ENCODE measurements at regions of chr7 and their contacts with region 1.

Region 1: DNA sequence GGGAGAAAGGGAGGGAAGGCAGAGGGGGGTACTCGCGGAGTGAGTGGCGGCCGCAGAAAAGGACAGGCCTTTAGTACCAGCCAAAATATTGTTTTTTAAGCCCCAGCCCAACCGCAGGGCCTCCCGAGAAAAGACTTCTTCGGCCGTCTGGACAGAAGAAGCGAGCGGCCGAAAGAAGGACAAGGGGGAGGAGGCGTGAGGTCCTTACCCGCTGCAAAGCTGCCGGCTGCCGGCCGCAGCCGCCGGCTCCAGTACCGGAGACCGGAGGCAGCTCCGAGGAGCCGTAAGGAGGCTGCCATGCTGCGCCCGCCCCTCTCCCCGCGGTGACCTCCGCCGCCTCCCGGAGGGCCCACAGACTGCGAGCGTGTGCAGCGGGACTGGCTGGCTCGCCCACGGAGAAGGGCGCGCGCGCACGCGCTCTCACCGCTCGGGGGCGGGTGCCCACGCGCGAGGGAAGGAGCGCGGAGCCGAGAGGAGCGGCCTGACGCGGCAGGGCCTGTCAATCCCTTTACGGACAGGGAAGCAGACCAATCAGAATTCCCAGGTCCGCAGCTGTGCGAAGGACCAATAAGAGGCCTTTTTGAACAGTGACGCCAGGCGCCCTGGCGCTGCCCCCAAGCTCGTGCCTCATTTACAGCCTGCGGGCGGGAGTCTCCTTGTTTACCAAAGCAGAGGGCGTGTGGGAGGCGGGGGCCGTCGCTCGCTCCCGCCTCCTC is at the start of gene HIBADH:
- DNase-seq: peak; percentile 92 to 99
- ATAC-seq: peak; percentile 93 to 99 (median 94)
- H3K4me3 ChIP-seq: peak within 1 kb of the TSS; percentile 91
- H3K4me3 Mint-ChIP-seq: peak within 1 kb of the TSS; percentile 82
- H3K27ac ChIP-seq: peak within 1 kb of the TSS; percentile 69
- H3K27ac Mint-ChIP-seq: peak within 1 kb of the TSS; percentile 86 to 88
- H3K4me1 ChIP-seq: peaks cover 14% of the 10 kb centered on the region
- H3K4me1 Mint-ChIP-seq: peaks cover 4 to 5% of the 10 kb centered on the region in 2 donors
- H3K27me3 ChIP-seq: no peaks in the 10 kb centered on the region
- H3K27me3 Mint-ChIP-seq: no peaks in the 10 kb centered on the region
- CTCF ChIP-seq: no peak
- total RNA-seq, gene HIBADH: 8.0 to 9.9 (median 8.1) TPM

Region 2: GRCh38 chr7:25752967-25753791 is 1909.5 kb before region 1 on chr7:
- intact Hi-C with region 1: no loop called
- DNase-seq: no peak
- ATAC-seq: no peak
- H3K4me3 ChIP-seq: no peak overlapping the region
- H3K4me3 Mint-ChIP-seq: no peak overlapping the region
- H3K27ac ChIP-seq: no peak overlapping the region
- H3K27ac Mint-ChIP-seq: no peak overlapping the region
- H3K4me1 ChIP-seq: no peaks in the 10 kb centered on the region
- H3K4me1 Mint-ChIP-seq: no peaks in the 10 kb centered on the region
- H3K27me3 ChIP-seq: no peaks in the 10 kb centered on the region
- H3K27me3 Mint-ChIP-seq: peaks cover 6% of the 10 kb centered on the region in 2 donors
- CTCF ChIP-seq: no peak

Region 3: GRCh38 chr7:27709137-27710075 is 46.8 kb after region 1 on chr7:
- intact Hi-C with region 1: no loop called
- DNase-seq: no peak
- ATAC-seq: peak in 1 of 3 donors; percentile 46
- H3K4me3 ChIP-seq: no peak overlapping the region
- H3K4me3 Mint-ChIP-seq: no peak overlapping the region
- H3K27ac ChIP-seq: no peak overlapping the region
- H3K27ac Mint-ChIP-seq: no peak overlapping the region
- H3K4me1 ChIP-seq: no peaks in the 10 kb centered on the region
- H3K4me1 Mint-ChIP-seq: no peaks in the 10 kb centered on the region
- H3K27me3 ChIP-seq: no peaks in the 10 kb centered on the region
- H3K27me3 Mint-ChIP-seq: peaks cover 6 to 9% of the 10 kb centered on the region in 2 donors
- CTCF ChIP-seq: no peak

Region 4: GRCh38 chr7:27739909-27740448 is 77.3 kb after region 1 on chr7 and contains the start of gene TAX1BP1:
- intact Hi-C with region 1: loop called (anchors 1 kb)
- DNase-seq: peak; percentile 93 to 98
- ATAC-seq: peak; percentile 89 to 97 (median 90)
- H3K4me3 ChIP-seq: peak within 1 kb of the TSS; percentile 93
- H3K4me3 Mint-ChIP-seq: peak within 1 kb of the TSS; percentile 99
- H3K27ac ChIP-seq: peak within 1 kb of the TSS; percentile 97
- H3K27ac Mint-ChIP-seq: peak within 1 kb of the TSS; percentile 98 to 99
- H3K4me1 ChIP-seq: peaks cover 12% of the 10 kb centered on the region
- H3K4me1 Mint-ChIP-seq: peaks cover 42 to 46% of the 10 kb centered on the region in 2 donors
- H3K27me3 ChIP-seq: no peaks in the 10 kb centered on the region
- H3K27me3 Mint-ChIP-seq: peaks cover under 1 to 5% of the 10 kb centered on the region in 2 donors
- CTCF ChIP-seq: no peak
- total RNA-seq, gene TAX1BP1: 135 to 158 (median 150) TPM

Region 5: GRCh38 chr7:27901028-27901760 is 238.5 kb after region 1 on chr7:
- intact Hi-C with region 1: loop called (anchors 1 kb)
- DNase-seq: peak in 1 of 2 donors; percentile 60
- ATAC-seq: peak; percentile 57 to 80 (median 75)
- H3K4me3 ChIP-seq: peak overlapping the region; percentile 20
- H3K4me3 Mint-ChIP-seq: peak overlapping the region; percentile 71
- H3K27ac ChIP-seq: peak overlapping the region; percentile 93
- H3K27ac Mint-ChIP-seq: peak overlapping the region; percentile 95
- H3K4me1 ChIP-seq: peaks cover 31% of the 10 kb centered on the region
- H3K4me1 Mint-ChIP-seq: peaks cover 50 to 61% of the 10 kb centered on the region in 2 donors
- H3K27me3 ChIP-seq: no peaks in the 10 kb centered on the region
- H3K27me3 Mint-ChIP-seq: no peaks in the 10 kb centered on the region
- CTCF ChIP-seq: no peak